T-cell (primary cell): ENCODE measurements at regions of chr5 and their contacts with region 1.

Region 1: GRCh38 chr5:151550146-151550545 is 41.0 kb downstream of the FAT2 start:
- DNase-seq: no peak
- ATAC-seq: no peak
- H3K4me3 ChIP-seq: no peak overlapping the region
- H3K4me3 Mint-ChIP-seq: no peak overlapping the region
- H3K27ac ChIP-seq: no peak overlapping the region
- H3K27ac Mint-ChIP-seq: no peak overlapping the region
- H3K4me1 ChIP-seq: no peaks in the 10 kb centered on the region
- H3K4me1 Mint-ChIP-seq: no peaks in the 10 kb centered on the region
- H3K27me3 ChIP-seq: peaks cover 0 to 5% of the 10 kb centered on the region in 2 experiments
- H3K27me3 Mint-ChIP-seq: no peaks in the 10 kb centered on the region

Region 2: GRCh38 chr5:150978590-150978989 is 571.6 kb before region 1 on chr5:
- CTCF ChIA-PET with region 1: no interaction called
- POLR2A ChIA-PET with region 1: interaction called in 1 of 2 experiments, 13 read pairs
- DNase-seq: no peak
- ATAC-seq: no peak
- H3K4me3 ChIP-seq: no peak overlapping the region
- H3K4me3 Mint-ChIP-seq: no peak overlapping the region
- H3K27ac ChIP-seq: no peak overlapping the region
- H3K27ac Mint-ChIP-seq: no peak overlapping the region
- H3K4me1 ChIP-seq: no peaks in the 10 kb centered on the region
- H3K4me1 Mint-ChIP-seq: no peaks in the 10 kb centered on the region
- H3K27me3 ChIP-seq: peaks cover 2 to 4% of the 10 kb centered on the region in 2 experiments
- H3K27me3 Mint-ChIP-seq: peaks cover 0 to 20% of the 10 kb centered on the region in 2 donors